IMR-90 (cell line): ENCODE measurements at regions of chrX and their contacts with region 1.

Region 1: DNA sequence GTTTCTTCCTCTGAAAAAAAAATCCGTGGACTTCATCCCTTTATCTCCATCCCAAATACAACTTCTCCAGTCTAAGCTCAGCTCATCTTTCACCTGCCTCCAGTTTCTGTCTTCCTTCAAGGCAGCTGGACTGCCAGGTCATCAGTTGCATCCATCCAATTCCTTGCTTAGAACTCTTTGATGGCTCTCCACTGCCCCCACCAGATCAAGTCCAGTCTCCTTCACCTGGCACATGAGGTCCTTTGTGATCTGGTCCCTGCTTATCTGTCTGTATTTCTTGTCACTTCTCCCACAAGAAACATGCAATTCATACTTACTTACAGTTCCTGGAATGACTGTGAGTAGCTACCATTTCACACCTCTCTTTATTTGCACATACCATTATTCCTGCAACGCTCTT is 33.8 kb downstream of the OTUD6A start:
- DNase-seq: peak; percentile 25
- ATAC-seq: no peak
- H3K4me3 ChIP-seq: no peak overlapping the region
- H3K27ac ChIP-seq: no peak overlapping the region
- H3K4me1 ChIP-seq: no peaks in the 10 kb centered on the region
- H3K27me3 ChIP-seq: no peaks in the 10 kb centered on the region; the same call in 1 of the 2 replicates
- CTCF ChIP-seq: peak; percentile 29
- POLR2A ChIP-seq: no peak
- RAD21 ChIP-seq: peak; percentile 45

Region 2: GRCh38 chrX:68822641-68823410 is 1273.2 kb before region 1 on chrX:
- CTCF ChIA-PET with region 1: no interaction called
- POLR2A ChIA-PET with region 1: no interaction called
- dilution Hi-C with region 1: no loop called
- in situ Hi-C with region 1: no loop called
- intact Hi-C with region 1: loop called (anchors 5 kb)
- DNase-seq: peak; percentile 47
- ATAC-seq: peak; percentile 92
- H3K4me3 ChIP-seq: no peak overlapping the region
- H3K27ac ChIP-seq: no peak overlapping the region
- H3K4me1 ChIP-seq: no peaks in the 10 kb centered on the region
- H3K27me3 ChIP-seq: peaks cover 35% of the 10 kb centered on the region
- CTCF ChIP-seq: peak; percentile 74
- POLR2A ChIP-seq: no peak
- RAD21 ChIP-seq: peak; percentile 81

Region 3: DNA sequence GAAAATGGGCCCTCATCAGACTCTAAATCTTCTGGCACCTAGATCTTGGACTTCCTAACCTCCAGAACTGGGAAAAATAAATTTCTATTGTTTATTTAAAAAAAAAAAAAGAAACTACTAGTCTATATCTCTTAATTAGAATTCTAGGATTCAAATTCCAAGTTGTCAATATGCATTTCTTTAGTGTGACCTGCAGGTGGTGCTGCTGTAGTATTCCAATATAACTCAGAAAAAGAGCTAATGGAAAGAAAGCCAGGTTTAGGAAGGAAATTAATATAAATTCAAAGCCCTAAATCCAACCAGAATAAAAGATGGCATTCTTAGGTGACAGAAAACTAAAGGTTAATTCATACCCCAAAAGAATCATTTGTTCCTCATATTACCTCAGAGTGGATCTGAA is 671.9 kb before region 1 on chrX:
- CTCF ChIA-PET with region 1: no interaction called
- POLR2A ChIA-PET with region 1: no interaction called
- dilution Hi-C with region 1: no loop called
- in situ Hi-C with region 1: no loop called
- intact Hi-C with region 1: loop called (anchors 5 kb)
- DNase-seq: peak; percentile 16
- ATAC-seq: no peak
- H3K4me3 ChIP-seq: no peak overlapping the region
- H3K27ac ChIP-seq: no peak overlapping the region
- H3K4me1 ChIP-seq: no peaks in the 10 kb centered on the region
- H3K27me3 ChIP-seq: peaks cover 12% of the 10 kb centered on the region
- CTCF ChIP-seq: peak; percentile 51
- POLR2A ChIP-seq: no peak
- RAD21 ChIP-seq: peak; percentile 33; the same call in 1 of the 2 replicates

Region 4: DNA sequence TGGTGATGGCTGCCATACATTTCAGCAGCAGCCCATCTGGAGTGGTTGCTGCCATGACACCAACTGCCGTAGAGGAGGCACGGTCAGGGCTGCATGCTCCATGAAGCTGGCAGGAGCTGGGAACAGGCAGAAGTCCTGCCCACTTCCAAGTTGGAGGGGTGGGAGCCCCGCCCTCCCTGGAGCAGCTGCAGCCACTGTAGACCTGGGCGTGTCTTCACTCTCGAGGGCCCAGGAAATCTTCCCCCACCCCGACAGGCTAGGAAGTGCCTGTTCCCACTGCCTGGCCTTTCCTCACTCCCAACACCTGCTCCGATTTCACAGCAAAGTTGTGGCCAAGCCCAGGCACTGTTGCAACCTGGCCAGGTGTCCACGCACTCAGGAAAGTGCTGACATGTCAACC is 549.6 kb before region 1 on chrX:
- CTCF ChIA-PET with region 1: no interaction called
- POLR2A ChIA-PET with region 1: no interaction called
- dilution Hi-C with region 1: no loop called
- in situ Hi-C with region 1: loop called (anchors 10 kb)
- intact Hi-C with region 1: no loop called
- DNase-seq: no peak
- ATAC-seq: no peak
- H3K4me3 ChIP-seq: no peak overlapping the region
- H3K27ac ChIP-seq: no peak overlapping the region
- H3K4me1 ChIP-seq: no peaks in the 10 kb centered on the region
- H3K27me3 ChIP-seq: peaks cover 3% of the 10 kb centered on the region
- CTCF ChIP-seq: no peak
- POLR2A ChIP-seq: no peak
- RAD21 ChIP-seq: no peak

Region 5: GRCh38 chrX:69615779-69616456 is 480.1 kb before region 1 on chrX and contains the start of gene EDA:
- CTCF ChIA-PET with region 1: no interaction called
- POLR2A ChIA-PET with region 1: no interaction called
- dilution Hi-C with region 1: no loop called
- in situ Hi-C with region 1: no loop called
- intact Hi-C with region 1: loop called (anchors 5 kb)
- DNase-seq: peak; percentile 34
- ATAC-seq: peak; percentile 95
- H3K4me3 ChIP-seq: peak within 1 kb of the TSS; percentile 33
- H3K27ac ChIP-seq: no peak within 1 kb of the TSS
- H3K4me1 ChIP-seq: no peaks in the 10 kb centered on the region
- H3K27me3 ChIP-seq: peaks cover 17% of the 10 kb centered on the region
- CTCF ChIP-seq: no peak
- POLR2A ChIP-seq: no peak
- RAD21 ChIP-seq: no peak
- total RNA-seq, gene EDA: under 0.01 TPM in 2 replicates

Region 6: GRCh38 chrX:70030301-70030767 is 65.7 kb before region 1 on chrX:
- CTCF ChIA-PET with region 1: interaction called, 6 read pairs
- POLR2A ChIA-PET with region 1: no interaction called
- dilution Hi-C with region 1: no loop called
- in situ Hi-C with region 1: no loop called
- intact Hi-C with region 1: loop called (anchors 2 kb)
- DNase-seq: peak; percentile 49
- ATAC-seq: peak; percentile 78
- H3K4me3 ChIP-seq: no peak overlapping the region
- H3K27ac ChIP-seq: no peak overlapping the region
- H3K4me1 ChIP-seq: no peaks in the 10 kb centered on the region
- H3K27me3 ChIP-seq: peaks cover 15% of the 10 kb centered on the region
- CTCF ChIP-seq: peak; percentile 59
- POLR2A ChIP-seq: no peak
- RAD21 ChIP-seq: peak; percentile 53

Region 7: DNA sequence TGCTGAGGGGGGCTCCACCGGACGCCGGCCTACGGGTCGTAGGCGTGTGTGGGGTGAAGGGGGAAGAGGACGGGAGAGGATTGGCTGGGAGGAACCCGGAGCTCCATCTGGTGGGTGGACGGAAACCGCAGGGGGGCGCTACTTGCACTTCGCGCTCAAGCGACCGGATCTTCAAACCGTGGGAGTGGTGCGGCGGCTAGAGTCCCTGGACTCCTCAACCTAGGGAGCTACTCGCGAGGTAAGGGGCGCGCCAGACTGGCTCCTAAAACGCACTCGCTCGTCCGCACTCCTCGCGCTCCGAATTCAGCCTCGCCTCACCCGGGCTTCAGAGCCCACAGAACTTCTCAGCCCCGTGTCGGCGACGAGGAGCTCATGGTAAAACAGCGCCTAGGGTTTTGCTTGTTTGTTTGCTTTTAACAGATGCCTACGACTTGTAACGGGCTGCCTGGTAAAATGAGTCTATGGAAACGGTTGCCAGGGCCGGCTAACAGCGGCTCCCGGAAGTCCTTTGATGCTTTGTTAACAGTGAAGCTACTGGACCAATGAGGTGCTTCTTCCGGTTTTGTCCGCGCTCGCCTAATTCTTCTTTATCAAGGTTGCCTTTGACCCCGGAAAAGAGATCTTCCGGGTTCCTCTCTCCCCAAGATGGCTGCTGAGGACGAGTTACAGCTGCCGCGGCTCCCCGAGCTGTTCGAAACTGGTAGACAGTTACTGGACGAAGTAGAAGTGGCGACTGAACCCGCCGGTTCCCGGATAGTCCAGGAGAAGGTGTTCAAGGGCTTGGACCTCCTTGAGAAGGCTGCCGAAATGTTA is 37.5 kb after region 1 on chrX and contains the start of gene IGBP1:
- CTCF ChIA-PET with region 1: no interaction called
- POLR2A ChIA-PET with region 1: no interaction called
- dilution Hi-C with region 1: no loop called
- in situ Hi-C with region 1: no loop called
- intact Hi-C with region 1: no loop called
- DNase-seq: peak; percentile 83
- ATAC-seq: peak; percentile 88
- H3K4me3 ChIP-seq: peak within 1 kb of the TSS; percentile 83
- H3K27ac ChIP-seq: peak within 1 kb of the TSS; percentile 92
- H3K4me1 ChIP-seq: no peaks in the 10 kb centered on the region
- H3K27me3 ChIP-seq: no peaks in the 10 kb centered on the region
- CTCF ChIP-seq: peak; percentile 65
- POLR2A ChIP-seq: peak; percentile 75
- RAD21 ChIP-seq: peak; percentile 18; the same call in 1 of the 2 replicates
- total RNA-seq, gene IGBP1: 75.3 and 87.1 TPM in 2 replicates